Activated B cell treated with CpG ODN at 0.5 μM for 24 hours (primary cell): ENCODE measurements at regions of chr20 and their contacts with region 1.

Region 1: GRCh38 chr20:21505161-21505809 is 8.6 kb downstream of the NKX2-2 start:
- DNase-seq: peak; percentile 69
- ATAC-seq: peak; percentile 57
- H3K4me3 Mint-ChIP-seq: peak overlapping the region; percentile 38
- H3K27ac Mint-ChIP-seq: no peak overlapping the region
- H3K4me1 Mint-ChIP-seq: peaks cover 24% of the 10 kb centered on the region
- H3K27me3 Mint-ChIP-seq: peaks cover 63% of the 10 kb centered on the region
- CTCF ChIP-seq: peak; percentile 35

Region 2: DNA sequence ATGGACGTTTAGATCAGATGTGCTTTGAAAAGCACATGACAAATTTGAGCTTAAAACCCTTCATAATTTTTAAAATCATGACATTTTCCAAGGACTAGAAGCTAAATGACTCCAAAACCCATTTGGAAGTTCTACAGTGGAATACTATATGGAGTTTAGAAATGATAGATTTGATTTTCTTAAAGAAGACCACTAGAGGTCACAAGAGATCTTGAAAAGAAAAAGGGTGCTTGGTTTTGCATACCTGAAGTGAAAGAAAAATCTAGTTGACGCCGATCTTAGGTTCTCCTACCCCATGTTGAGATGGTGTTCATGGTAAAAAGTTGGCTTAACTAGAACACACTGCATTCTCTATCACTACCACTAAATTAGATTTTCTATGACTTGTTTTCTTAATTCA is 1421.5 kb before region 1 on chr20:
- CTCF ChIA-PET with region 1: interaction called, 3 read pairs
- POLR2A ChIA-PET with region 1: no interaction called
- intact Hi-C with region 1: loop called (anchors 2 kb)
- DNase-seq: no peak
- ATAC-seq: peak; percentile 54
- H3K4me3 Mint-ChIP-seq: no peak overlapping the region
- H3K27ac Mint-ChIP-seq: no peak overlapping the region
- H3K4me1 Mint-ChIP-seq: peaks cover 2% of the 10 kb centered on the region
- H3K27me3 Mint-ChIP-seq: peaks cover 11% of the 10 kb centered on the region
- CTCF ChIP-seq: peak; percentile 85

Region 3: DNA sequence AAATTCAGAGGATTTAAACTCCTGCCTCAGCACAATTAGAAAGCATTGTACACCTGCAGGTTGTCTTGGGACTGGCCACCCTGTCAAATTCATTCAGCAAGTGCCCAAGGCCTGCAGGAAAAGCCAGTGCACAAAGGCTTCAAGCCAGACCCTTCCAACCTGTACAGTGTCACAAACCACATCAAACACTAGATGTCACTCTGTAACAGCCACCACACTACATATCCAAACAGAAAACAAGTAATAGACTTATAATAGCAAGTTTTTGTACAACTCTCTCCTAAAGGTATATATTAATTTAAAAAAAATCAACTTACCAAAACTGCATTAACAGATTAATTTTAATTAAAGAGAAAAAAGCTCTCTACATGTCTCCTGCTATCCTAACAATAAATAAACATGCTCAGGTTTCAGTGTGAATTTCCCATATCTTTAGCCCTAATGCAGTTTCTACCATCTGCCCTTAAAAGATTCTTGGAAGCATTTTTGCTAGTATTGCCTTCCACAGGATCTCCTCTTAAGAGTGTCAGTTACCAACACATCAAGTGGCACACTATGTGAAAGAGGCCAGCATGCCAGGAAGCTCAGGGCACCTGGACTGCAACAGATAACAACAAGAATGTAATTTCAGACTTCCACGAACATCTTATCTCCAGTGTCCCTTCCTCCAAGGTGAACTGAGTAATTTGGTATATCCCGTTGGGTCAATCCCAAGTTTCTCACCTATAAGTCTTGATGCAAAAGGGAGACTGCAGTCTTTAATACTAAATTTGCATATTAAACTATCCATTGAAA is 840.3 kb before region 1 on chr20:
- CTCF ChIA-PET with region 1: interaction called, 3 read pairs
- POLR2A ChIA-PET with region 1: no interaction called
- intact Hi-C with region 1: loop called (anchors 10 kb)
- DNase-seq: no peak
- ATAC-seq: no peak
- H3K4me3 Mint-ChIP-seq: no peak overlapping the region
- H3K27ac Mint-ChIP-seq: no peak overlapping the region
- H3K4me1 Mint-ChIP-seq: peaks cover 36% of the 10 kb centered on the region
- H3K27me3 Mint-ChIP-seq: no peaks in the 10 kb centered on the region
- CTCF ChIP-seq: no peak

Region 4: GRCh38 chr20:20860078-20860806 is 645.0 kb before region 1 on chr20:
- CTCF ChIA-PET with region 1: interaction called, 35 read pairs
- POLR2A ChIA-PET with region 1: no interaction called
- intact Hi-C with region 1: loop called (anchors 1 kb)
- DNase-seq: peak; percentile 60
- ATAC-seq: peak; percentile 21
- H3K4me3 Mint-ChIP-seq: no peak overlapping the region
- H3K27ac Mint-ChIP-seq: no peak overlapping the region
- H3K4me1 Mint-ChIP-seq: no peaks in the 10 kb centered on the region
- H3K27me3 Mint-ChIP-seq: peaks cover 25% of the 10 kb centered on the region
- CTCF ChIP-seq: no peak

Region 5: DNA sequence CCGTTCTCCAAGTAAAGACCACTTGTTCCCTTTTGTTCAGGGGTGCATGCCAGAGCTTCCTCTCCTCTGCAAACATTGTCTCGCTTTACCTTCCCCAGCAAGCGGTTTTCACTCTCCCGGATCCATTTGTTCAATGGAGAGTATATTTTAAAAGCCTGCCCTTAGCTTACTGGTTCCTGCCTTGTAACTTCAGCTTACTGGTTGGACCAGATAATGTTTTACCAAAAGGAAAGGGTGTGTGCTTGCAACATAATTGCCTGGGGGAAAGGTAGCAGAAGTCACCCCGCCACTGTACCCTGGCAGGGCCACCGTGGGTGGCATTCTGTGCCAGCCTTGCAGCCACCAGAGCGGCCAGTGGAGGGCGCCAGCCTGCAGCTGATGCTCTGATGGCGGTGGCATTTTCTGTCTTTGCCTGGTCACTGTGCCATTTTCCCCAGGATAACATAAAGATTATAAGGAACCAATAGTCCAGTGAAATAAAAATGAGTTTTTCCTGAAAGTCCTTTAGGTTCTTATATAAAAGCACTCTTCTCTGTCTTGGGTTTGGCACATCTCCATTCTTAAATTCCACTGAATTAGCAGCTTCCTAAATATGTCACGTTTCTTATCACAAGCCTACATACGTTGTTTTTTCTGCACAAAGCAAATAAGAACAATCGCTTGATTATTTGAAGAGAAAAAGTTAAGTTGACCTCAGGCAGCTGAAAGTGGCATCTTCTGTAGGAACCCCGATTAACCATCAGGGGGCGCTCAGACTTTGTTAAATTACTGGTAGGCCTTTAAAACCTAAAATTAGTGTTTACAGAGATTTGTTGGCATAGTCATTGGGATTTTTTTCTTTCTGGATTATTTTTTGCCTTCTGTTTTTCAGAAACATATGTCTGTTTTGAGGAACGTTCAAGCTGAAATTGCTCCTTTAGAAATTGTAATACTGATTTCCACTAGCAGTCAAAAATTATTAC is 269.5 kb before region 1 on chr20:
- CTCF ChIA-PET with region 1: interaction called, 79 read pairs
- POLR2A ChIA-PET with region 1: no interaction called
- intact Hi-C with region 1: loop called (anchors 1 kb)
- DNase-seq: no peak
- ATAC-seq: peak; percentile 58
- H3K4me3 Mint-ChIP-seq: no peak overlapping the region
- H3K27ac Mint-ChIP-seq: no peak overlapping the region
- H3K4me1 Mint-ChIP-seq: peaks cover 3% of the 10 kb centered on the region
- H3K27me3 Mint-ChIP-seq: no peaks in the 10 kb centered on the region
- CTCF ChIP-seq: peak; percentile 92

Region 6: DNA sequence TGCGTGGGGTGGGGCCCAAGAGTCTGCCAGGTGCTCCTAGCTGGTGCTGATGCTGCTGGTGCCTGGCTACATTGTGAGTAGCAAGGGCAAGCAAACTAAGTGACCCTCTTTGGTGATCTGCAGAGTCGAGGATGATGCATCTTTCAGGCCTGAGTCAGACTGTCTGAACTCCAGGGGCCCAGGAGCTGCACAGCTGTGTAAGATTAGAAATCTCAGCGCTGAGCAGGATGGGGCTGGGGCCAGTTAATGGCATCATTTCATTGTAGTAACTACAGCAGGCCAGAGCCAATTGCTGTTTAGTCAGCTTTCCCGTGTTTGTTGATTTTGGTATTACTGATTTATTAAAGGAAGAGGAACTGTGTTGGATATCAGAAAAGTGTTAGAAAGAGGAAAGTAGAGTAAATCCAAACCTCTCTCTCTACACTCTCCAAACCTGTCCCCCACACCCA is 565.3 kb after region 1 on chr20:
- CTCF ChIA-PET with region 1: no interaction called
- POLR2A ChIA-PET with region 1: no interaction called
- intact Hi-C with region 1: no loop called
- DNase-seq: no peak
- ATAC-seq: no peak
- H3K4me3 Mint-ChIP-seq: no peak overlapping the region
- H3K27ac Mint-ChIP-seq: no peak overlapping the region
- H3K4me1 Mint-ChIP-seq: no peaks in the 10 kb centered on the region
- H3K27me3 Mint-ChIP-seq: no peaks in the 10 kb centered on the region
- CTCF ChIP-seq: no peak